Left lung (tissue), 14 donors: ENCODE measurements at regions of chr15 and their contacts with region 1.

Region 1: DNA sequence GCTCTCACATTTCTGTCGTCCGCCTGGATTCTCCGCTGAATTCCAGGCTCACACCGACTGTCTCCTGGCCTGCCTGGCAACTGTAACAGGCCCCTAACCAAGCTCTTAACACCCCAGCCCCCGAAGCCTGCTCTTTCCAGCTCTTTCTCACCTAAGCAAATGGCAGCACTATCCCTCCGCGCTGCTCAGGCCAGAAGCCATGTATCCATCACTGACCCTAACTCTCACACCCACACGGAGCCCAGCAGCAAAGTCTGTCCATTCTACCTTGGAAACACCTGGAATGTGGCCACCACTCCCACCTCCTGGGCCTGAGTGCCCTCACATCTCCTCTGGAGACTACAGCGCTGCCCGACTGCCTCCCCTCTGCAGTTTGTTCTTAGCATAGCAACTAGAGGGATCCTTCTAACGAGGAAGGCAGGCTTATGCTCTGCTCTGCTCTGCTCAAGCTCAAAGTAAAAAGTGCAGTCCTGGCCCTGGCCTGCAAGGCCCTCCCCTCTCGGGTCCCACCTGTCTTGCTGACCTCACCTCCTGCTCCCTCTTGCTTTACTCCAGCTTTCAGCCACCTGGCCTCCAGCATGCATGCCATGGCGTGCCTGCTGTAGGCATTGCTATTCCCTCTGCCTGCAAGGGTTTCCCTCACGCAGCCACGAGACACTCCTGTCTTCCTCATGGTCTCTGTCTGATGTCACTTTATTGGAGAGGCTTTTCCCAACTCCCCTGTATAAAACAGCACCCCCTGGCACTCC is 27.2 kb downstream of the FEM1B start:
- DNase-seq: peak in 1 of 4 donors; percentile 53
- ATAC-seq: no peak
- H3K4me3 ChIP-seq: no peak overlapping the region
- H3K27ac ChIP-seq: no peak overlapping the region
- H3K4me1 ChIP-seq: peaks cover 0 to 9% of the 10 kb centered on the region in 2 donors
- H3K27me3 ChIP-seq: no peaks in the 10 kb centered on the region
- CTCF ChIP-seq: no peak

Region 2: GRCh38 chr15:68252925-68253534 is 51.7 kb before region 1 on chr15:
- intact Hi-C with region 1: loop called in 1 of 2 experiments (anchors 10 kb)
- DNase-seq: peak in 1 of 4 donors; percentile 75
- ATAC-seq: peak; percentile 64
- H3K4me3 ChIP-seq: no peak overlapping the region
- H3K27ac ChIP-seq: no peak overlapping the region
- H3K4me1 ChIP-seq: peaks cover 0 to 28% of the 10 kb centered on the region in 2 donors
- H3K27me3 ChIP-seq: no peaks in the 10 kb centered on the region
- CTCF ChIP-seq: peak; percentile 69 to 79

Region 3: DNA sequence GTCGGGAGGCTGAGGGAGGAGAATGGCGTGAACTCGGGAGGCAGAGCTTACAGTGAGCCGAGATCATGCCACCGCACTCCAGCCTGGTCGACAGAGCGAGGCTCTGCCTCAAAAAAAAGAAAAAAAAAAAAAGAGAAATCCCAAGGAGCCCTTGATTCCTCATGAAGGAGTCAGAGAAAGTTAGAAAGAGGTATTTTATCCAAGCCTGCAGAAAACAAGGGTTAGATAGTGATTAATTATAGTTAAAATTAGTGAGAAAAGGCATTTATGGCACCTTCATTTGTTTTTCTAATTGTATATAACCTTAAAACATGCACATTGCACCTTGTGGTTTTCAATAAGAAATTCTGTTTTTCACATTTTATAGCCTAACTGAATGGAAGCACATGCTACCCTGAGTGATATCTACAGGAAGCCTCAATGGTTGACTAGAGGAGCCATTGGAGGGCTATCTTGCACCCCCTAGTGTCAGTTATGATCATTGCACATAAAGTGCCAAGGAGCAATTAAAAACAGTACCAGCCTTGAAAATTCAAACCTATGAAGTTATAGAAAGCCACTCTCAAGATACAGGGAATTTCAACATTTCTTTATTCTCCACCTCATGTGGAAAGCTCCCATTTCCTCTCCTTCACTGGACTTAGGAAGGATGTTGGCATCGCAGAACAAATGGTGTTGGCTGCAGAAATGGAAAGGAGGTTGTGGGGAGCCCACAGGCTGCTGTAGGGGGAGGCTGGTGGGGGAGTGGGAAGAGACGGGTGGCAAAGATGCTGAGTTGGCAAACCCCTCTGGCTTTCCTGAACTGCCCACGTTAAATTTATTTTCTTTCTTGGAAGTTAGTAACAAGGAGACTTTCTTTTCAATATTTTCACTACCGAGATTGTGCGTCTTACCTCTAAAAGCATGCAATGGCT is 78.7 kb after region 1 on chr15:
- intact Hi-C with region 1: loop called in 1 of 2 experiments (anchors 10 kb)
- DNase-seq: peak in 1 of 4 donors; percentile 11
- ATAC-seq: peak; percentile 86
- H3K4me3 ChIP-seq: no peak overlapping the region
- H3K27ac ChIP-seq: no peak overlapping the region
- H3K4me1 ChIP-seq: peaks cover 0 to 9% of the 10 kb centered on the region in 2 donors
- H3K27me3 ChIP-seq: peaks cover 0 to 19% of the 10 kb centered on the region in 2 donors
- CTCF ChIP-seq: peak; percentile 70 to 78